Activated CD4-positive, alpha-beta memory T cell treated with anti-CD3 and anti-CD28 coated beads, Interleukin-2, amount 10 ng/mL, durations not matched to agents 7 days and 5 days (primary cell): ENCODE measurements at regions of chr19 and their contacts with region 1.

Region 1: DNA sequence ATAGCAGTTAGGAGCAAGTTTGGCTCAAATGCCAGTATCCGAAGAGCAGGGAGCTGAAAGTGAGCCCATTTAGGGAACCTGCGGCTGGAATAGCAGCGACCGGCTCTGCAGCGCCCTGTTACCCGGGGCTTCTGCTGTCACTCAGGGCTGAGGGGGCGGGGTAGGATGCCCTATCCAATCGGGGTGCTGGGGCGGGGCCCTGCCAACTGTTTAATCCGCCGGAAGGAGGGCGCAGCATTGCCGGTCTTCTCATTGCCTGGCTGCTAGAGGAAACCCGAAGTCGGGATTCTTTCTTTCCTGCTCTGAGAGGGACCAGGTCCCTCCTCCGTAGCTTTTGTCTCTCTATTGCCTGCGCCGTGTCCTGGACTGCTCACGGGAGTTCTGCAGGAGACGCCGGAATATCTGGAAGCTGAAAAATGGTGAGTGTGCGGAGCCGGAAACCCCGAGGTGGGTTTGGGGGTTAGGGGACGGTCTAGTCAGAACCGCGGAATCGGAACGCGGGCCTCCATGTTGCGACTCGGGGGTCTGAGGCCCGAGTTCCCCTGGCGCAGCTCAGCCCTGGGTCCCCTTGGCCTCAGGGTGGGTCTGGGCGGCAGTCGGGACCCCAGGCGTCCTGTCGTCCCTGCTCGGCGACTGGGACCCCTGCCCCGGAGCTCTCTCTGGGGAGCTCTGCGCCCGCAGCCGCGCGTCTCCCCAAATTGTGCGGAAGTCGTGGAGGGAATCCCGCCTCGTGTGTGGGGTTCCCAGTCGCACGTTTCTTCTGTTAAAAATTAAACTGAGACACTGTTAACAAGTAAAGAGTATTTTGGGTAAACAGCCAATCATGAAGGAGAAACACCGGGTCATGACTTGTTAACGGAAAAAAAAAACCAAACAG is 22.8 kb downstream of the ZNF763 start:
- DNase-seq: peak; percentile 94
- H3K4me3 Mint-ChIP-seq: peak overlapping the region; percentile 94
- H3K27ac Mint-ChIP-seq: peak overlapping the region; percentile 98
- H3K4me1 Mint-ChIP-seq: peaks cover 20% of the 10 kb centered on the region
- H3K27me3 Mint-ChIP-seq: no peaks in the 10 kb centered on the region

Region 2: DNA sequence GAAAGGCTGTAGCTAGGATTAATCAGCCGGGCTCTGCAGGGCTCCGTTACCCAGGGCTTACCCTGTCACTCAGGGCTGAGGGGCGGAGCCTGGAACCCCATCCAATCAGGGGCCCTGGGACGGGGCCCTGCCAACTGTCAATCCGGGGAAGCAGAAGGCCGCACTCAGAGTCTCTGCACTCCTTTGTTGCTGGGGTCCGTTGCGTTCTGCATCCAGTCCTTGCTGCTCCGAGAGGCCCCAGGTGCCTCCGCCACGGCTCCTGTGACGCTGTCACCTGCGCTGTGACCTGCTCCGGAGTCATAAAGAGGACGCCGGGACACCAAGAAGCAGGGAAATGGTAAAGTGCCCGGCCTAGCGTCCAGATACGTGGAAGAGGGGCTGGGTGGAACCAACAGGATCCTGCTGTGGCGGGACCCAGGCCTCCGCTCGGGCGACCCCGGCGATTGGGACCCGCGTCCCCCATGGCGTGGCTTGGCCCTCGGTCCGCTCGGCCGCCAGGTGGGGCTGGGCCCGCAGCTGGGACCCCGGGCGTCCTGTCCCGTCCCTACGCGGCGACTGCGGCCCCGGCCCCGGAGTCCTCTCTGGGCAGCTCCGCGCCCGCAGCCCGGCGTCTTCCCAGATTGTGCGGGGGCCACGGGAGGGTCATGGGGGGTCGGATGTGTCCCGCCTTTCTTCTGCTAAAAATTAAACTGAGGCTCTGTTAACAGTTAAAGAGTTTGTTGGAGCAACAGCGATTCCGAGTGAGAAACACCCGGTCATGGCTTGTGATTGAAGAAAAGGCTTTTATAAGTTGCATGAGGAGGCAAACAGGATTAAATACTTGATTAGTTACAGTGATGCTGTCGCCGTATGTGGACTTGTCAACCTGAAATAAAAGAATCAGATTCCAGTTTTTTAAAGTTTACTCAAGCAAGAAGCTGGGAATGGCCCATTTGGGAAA is 189.0 kb before region 1 on chr19 and contains the start of gene ZNF491:
- CTCF ChIA-PET with region 1: interaction called, 12 read pairs
- POLR2A ChIA-PET with region 1: interaction called, 4 read pairs
- DNase-seq: peak; percentile 83
- H3K4me3 Mint-ChIP-seq: peak within 1 kb of the TSS; percentile 79
- H3K27ac Mint-ChIP-seq: peak within 1 kb of the TSS; percentile 54
- H3K4me1 Mint-ChIP-seq: peaks cover 15% of the 10 kb centered on the region
- H3K27me3 Mint-ChIP-seq: peaks cover 3% of the 10 kb centered on the region
- total RNA-seq, gene ZNF491: 0.80 to 0.98 TPM

Region 3: GRCh38 chr19:11881151-11881800 is 106.4 kb before region 1 on chr19:
- CTCF ChIA-PET with region 1: interaction called, 11 read pairs
- POLR2A ChIA-PET with region 1: no interaction called
- DNase-seq: peak; percentile 68
- H3K4me3 Mint-ChIP-seq: no peak overlapping the region
- H3K27ac Mint-ChIP-seq: no peak overlapping the region
- H3K4me1 Mint-ChIP-seq: peaks cover 2% of the 10 kb centered on the region
- H3K27me3 Mint-ChIP-seq: no peaks in the 10 kb centered on the region

Region 4: DNA sequence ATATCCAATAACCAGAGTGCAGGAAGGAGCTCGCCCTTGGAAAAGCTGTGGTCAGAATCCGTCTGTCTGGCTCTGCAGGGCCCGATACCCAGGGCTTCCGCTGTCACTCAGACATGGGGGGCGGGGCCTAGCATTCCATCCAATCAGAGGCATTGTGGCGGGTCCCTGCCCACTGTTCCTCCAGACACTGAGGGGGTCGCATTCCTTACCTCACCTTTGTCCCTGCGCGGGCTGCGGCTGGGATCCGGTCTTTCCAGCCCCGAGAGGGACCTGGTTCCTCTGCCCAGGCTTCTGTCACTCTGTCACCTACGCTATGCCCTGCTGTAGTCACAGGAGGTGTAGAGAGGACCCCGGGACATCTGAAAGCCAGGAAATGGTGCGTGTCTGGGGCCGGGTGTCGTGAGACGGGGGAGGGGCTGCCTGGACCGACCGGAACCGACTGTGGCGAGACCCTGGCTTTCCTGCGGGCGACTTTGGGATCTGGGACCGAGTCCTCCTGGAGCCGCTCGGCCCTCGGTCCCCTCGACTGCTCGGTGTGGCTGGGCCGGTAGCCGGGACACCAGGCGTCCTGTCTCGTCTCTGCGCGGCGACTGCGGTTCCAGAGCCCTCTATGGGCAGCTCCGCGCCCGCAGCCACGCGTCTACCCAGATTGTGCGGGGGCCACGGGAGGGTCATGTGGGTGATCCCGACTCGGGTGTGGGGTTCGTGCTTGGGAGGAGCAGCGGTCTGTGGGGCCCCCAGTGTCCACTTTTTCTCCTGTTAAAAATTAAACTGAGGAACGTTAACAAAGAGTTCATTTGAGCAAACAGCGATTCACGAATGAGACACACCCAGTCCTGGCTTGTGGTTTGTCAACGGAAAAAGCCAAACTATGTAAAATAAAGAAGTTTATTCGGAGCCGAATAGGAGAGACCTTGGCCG is 99.8 kb before region 1 on chr19 and contains the start of gene ZNF69:
- CTCF ChIA-PET with region 1: interaction called, 11 read pairs
- POLR2A ChIA-PET with region 1: no interaction called
- DNase-seq: peak; percentile 53
- H3K4me3 Mint-ChIP-seq: peak within 1 kb of the TSS; percentile 83
- H3K27ac Mint-ChIP-seq: peak within 1 kb of the TSS; percentile 73
- H3K4me1 Mint-ChIP-seq: peaks cover 21% of the 10 kb centered on the region
- H3K27me3 Mint-ChIP-seq: no peaks in the 10 kb centered on the region
- total RNA-seq, gene ZNF69: 2.3 to 2.7 TPM

Region 5: GRCh38 chr19:11913680-11914079 is 74.0 kb before region 1 on chr19:
- CTCF ChIA-PET with region 1: no interaction called
- POLR2A ChIA-PET with region 1: no interaction called
- DNase-seq: no peak
- H3K4me3 Mint-ChIP-seq: no peak overlapping the region
- H3K27ac Mint-ChIP-seq: no peak overlapping the region
- H3K4me1 Mint-ChIP-seq: no peaks in the 10 kb centered on the region
- H3K27me3 Mint-ChIP-seq: no peaks in the 10 kb centered on the region

Region 6: DNA sequence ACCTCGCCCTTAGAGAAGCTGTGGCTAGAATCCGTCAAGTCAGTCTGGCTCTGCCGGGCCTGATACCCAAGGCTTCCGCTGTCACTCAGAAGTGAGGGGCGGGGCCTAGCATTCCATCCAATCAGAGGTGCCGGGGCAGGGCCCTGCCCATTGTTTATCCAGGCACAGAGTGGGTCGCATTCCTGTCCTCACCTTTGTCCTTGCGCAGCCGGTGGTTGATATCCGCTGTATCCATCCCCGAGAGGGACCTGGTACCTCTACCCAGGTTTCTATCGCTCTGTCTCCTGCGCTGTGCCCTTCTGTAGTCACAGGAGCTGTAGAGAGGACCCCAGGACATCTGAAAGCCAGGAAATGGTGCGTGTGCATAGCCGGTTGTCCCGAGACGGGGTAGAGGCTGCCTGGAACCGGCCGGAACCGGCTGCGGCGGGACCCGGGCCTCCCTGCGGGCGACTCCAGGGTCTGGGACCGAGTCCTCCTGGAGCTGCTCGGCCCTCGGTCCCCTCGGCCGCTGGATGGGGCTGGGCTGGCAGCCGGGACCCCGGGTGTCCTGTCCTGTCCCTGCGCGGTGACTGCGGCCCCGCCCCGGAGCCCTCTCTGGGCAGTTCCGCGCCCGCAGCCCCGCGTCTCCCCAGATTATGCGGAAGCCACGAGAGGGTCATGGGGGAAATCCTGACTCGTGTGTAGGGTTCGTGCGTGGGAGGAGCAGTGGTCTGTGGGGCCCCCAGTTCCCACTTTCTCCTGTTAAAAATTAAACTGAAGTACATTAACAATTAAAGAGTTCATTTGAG is 22.6 kb before region 1 on chr19 and contains the start of gene ZNF763:
- CTCF ChIA-PET with region 1: interaction called, 38 read pairs
- POLR2A ChIA-PET with region 1: interaction called, 16 read pairs
- DNase-seq: peak; percentile 91
- H3K4me3 Mint-ChIP-seq: peak within 1 kb of the TSS; percentile 85
- H3K27ac Mint-ChIP-seq: peak within 1 kb of the TSS; percentile 75
- H3K4me1 Mint-ChIP-seq: peaks cover 22% of the 10 kb centered on the region
- H3K27me3 Mint-ChIP-seq: no peaks in the 10 kb centered on the region
- total RNA-seq, gene ZNF763: 1.4 to 2.2 TPM

Region 7: DNA sequence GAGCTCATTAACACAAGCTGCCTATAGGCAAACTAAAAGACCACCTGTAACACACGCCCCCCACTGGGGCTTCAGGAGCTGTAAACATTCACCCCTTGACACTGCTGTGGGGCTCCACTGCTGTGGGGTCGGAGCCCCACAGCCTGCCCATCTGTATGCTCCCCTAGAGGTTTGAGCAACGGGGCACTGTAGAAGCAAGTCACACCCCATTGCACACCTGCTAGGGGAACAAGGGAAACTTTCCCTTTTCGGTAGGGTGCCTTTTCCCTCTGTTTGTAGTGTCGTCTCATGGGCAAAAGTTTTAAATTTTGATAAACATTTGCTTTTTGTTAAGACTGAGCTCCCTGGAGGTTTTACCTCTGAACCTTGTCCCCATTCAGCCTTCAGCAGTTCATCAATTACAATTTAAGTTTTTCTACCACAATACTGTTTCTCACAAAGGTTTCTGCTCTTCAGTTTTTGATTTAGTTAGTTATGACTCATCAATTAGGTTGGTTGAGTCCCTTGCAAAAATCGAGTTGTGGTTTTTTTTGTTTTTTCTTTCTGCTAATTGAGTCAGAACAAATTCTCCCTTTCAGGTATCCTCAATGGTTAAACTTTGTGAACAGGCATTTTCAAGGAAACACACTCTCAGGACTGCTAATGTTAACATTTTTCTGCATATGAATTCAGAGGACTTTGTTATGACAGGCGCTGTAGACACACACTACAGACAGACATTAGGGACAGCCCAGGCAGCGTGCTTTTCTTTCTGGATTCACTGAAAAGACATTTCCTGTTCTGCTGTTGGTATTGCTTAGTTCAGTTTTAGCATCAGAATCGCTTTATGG is 12.7 kb after region 1 on chr19:
- CTCF ChIA-PET with region 1: interaction called, 10 read pairs
- POLR2A ChIA-PET with region 1: interaction called, 6 read pairs
- DNase-seq: no peak
- H3K4me3 Mint-ChIP-seq: no peak overlapping the region
- H3K27ac Mint-ChIP-seq: peak overlapping the region; percentile 67
- H3K4me1 Mint-ChIP-seq: peaks cover 18% of the 10 kb centered on the region
- H3K27me3 Mint-ChIP-seq: no peaks in the 10 kb centered on the region